ENCODE measurements at regions of chr19 and their contacts with region 1.

Region 1: DNA sequence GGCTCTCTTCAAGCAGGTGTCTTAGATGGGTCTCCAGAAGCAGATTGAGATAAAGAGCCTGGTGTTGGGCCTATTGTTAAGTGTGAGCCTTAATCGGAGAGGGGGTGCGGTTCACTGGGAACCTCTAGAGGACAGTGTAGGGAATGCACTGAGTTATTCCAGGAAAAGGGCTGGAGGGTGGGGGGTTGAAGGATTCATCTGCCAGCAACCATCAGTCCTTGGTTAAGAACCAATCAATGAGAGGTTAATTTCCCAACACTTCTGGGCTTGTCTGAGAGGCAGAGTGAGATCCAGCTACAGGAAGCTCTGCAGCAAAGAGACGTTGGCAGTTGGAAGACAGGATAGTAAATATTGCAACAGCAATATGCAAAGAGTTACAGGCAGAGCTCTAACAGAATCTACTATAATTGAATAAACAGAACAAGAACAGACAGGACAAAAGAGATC is 28.7 kb downstream of the CYP4F2 start:
- DNase-seq: peak; percentile 57
- H3K4me3 ChIP-seq: no peak overlapping the region
- H3K27ac ChIP-seq: no peak overlapping the region
- H3K4me1 ChIP-seq: no peaks in the 10 kb centered on the region
- H3K27me3 ChIP-seq: peaks cover 4% of the 10 kb centered on the region
- CTCF ChIP-seq: peak; percentile 67

Region 2: GRCh38 chr19:15629003-15629880 is 239.9 kb before region 1 on chr19:
- CTCF ChIA-PET with region 1: no interaction called
- POLR2A ChIA-PET with region 1: no interaction called
- intact Hi-C with region 1: loop called (anchors 5 kb)
- DNase-seq: peak; percentile 74
- H3K4me3 ChIP-seq: no peak overlapping the region
- H3K27ac ChIP-seq: no peak overlapping the region
- H3K4me1 ChIP-seq: no peaks in the 10 kb centered on the region
- H3K27me3 ChIP-seq: no peaks in the 10 kb centered on the region
- CTCF ChIP-seq: peak; percentile 95